Psoas muscle (tissue), 8 donors: ENCODE measurements at regions of chr7 and their contacts with region 1.

Region 1: GRCh38 chr7:6637544-6638229 is 569 bp downstream of the ZNF316 start:
- DNase-seq: no peak
- ATAC-seq: peak; percentile 20 to 38 (median 26)
- H3K4me3 ChIP-seq: peak overlapping the region; percentile 96
- H3K27ac ChIP-seq: peak overlapping the region; percentile 71
- H3K4me1 ChIP-seq: peaks cover 12% of the 10 kb centered on the region
- H3K27me3 ChIP-seq: no peaks in the 10 kb centered on the region
- CTCF ChIP-seq: peak; percentile 18

Region 2: DNA sequence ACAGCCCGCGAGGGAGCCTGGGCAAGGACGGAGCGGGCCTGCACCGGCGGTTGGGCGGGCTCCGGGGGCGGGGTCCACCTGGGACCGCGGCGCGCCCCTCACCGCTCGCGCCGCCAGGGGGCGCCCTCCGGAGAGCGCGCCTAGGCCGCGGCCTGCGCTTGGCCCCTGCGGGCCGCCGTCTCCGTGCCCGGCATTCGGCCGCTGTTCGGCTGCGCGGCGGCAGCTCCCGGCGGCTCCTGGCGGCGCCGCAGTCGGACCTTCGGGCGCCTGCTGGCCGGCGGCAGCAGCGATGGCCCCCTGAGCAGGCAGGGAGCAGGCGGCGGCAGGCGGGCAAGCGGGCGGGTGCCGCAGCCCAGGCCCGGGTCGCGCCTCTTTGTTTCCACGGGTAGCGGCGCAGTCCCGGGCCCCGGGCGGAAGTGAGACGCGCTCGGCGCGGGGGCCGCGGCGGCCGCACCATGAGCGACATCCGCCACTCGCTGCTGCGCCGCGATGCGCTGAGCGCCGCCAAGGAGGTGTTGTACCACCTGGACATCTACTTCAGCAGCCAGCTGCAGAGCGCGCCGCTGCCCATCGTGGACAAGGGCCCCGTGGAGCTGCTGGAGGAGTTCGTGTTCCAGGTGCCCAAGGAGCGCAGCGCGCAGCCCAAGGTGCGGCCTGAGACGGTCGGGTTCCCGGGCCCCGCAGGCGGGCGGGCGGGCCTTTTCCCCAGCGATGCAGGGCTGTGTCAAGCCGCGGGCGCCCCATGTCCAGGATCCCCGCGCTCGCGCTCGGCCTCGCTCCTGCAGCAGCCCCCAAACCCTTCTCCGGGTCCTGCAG is 47.6 kb before region 1 on chr7 and contains the start of gene INTS15:
- intact Hi-C with region 1: loop called in 1 of 2 experiments (anchors 2 kb)
- DNase-seq: peak; percentile 83 to 89
- ATAC-seq: peak; percentile 89 to 98 (median 96)
- H3K4me3 ChIP-seq: peak within 1 kb of the TSS; percentile 97
- H3K27ac ChIP-seq: peak within 1 kb of the TSS; percentile 89
- H3K4me1 ChIP-seq: peaks cover 14% of the 10 kb centered on the region
- H3K27me3 ChIP-seq: no peaks in the 10 kb centered on the region
- CTCF ChIP-seq: peak; percentile 95
- total RNA-seq, gene INTS15: 14.1 to 26.3 (median 21.3) TPM

Region 3: GRCh38 chr7:6729492-6730342 is 92.0 kb after region 1 on chr7:
- intact Hi-C with region 1: loop called in 1 of 2 experiments (anchors 10 kb)
- DNase-seq: peak; percentile 95 to 97
- ATAC-seq: peak; percentile 100
- H3K4me3 ChIP-seq: peak overlapping the region; percentile 92
- H3K27ac ChIP-seq: peak overlapping the region; percentile 65
- H3K4me1 ChIP-seq: peaks cover 7% of the 10 kb centered on the region
- H3K27me3 ChIP-seq: peaks cover 0 to 4% (median 0%) of the 10 kb centered on the region in 3 donors
- CTCF ChIP-seq: peak; percentile 5